ENCODE measurements at regions of chr1 and their contacts with region 1.

Region 1: GRCh38 chr1:9629445-9630201 is 21.9 kb upstream of the PIK3CD start:
- DNase-seq: peak; percentile 41 to 91 (median 76)
- ATAC-seq: peak; percentile 52
- H3K4me3 ChIP-seq: peak overlapping the region; percentile 97
- H3K4me3 Mint-ChIP-seq: peak overlapping the region; percentile 98
- H3K27ac ChIP-seq: peak overlapping the region; percentile 72 to 84
- H3K27ac Mint-ChIP-seq: peak overlapping the region; percentile 92
- H3K4me1 ChIP-seq: peaks cover 77% of the 10 kb centered on the region
- H3K4me1 Mint-ChIP-seq: peaks cover 70% of the 10 kb centered on the region
- H3K27me3 ChIP-seq: no peaks in the 10 kb centered on the region
- H3K27me3 Mint-ChIP-seq: no peaks in the 10 kb centered on the region
- CTCF ChIP-seq: no peak

Region 2: GRCh38 chr1:9609998-9610397 is 19.6 kb before region 1 on chr1:
- CTCF ChIA-PET with region 1: no interaction called
- POLR2A ChIA-PET with region 1: no interaction called
- intact Hi-C with region 1: no loop called
- DNase-seq: no peak
- ATAC-seq: no peak
- H3K4me3 ChIP-seq: no peak overlapping the region
- H3K4me3 Mint-ChIP-seq: no peak overlapping the region
- H3K27ac ChIP-seq: no peak overlapping the region
- H3K27ac Mint-ChIP-seq: no peak overlapping the region
- H3K4me1 ChIP-seq: no peaks in the 10 kb centered on the region
- H3K4me1 Mint-ChIP-seq: no peaks in the 10 kb centered on the region
- H3K27me3 ChIP-seq: no peaks in the 10 kb centered on the region
- H3K27me3 Mint-ChIP-seq: no peaks in the 10 kb centered on the region
- CTCF ChIP-seq: no peak

Region 3: DNA sequence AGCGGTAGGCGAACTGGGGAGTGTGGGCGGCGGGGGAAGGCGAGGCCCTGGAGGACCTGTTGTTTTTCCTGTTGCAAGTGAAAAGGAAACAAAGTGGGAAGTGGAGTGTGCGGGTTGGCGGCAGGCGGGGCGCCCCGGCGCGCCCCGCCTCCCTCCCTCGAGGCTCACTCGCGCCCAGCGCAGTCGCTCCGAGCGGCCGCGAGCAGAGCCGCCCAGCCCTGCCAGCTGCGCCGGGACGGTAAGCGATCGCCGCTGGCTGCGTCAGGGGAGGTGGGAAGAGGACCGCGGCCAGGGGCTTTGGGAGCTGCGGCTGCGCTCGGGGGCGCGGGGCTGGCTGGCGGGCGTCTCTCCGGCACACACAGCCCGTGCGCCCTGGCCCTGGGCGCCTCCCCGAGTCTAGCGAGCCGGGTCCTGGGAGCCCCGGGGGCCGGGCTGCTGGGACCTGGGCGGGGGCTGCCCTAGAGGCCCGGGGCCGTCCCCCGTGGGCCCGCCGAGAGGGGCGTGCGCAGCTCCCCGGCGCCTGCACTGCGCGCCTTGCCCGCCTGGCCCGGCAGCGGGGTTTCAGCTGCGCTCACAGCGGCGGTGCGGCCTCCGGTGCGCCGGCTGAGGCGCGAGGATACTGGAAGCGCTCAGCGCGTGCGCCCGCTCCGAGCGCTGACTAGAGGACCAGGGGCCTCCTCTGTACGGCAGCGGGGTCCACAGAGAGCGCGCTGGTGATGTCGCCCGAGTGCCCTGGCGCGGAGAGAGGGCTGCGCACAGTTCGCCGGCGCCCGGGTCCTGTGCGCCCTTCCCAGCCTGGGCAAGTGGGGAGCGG is 22.1 kb after region 1 on chr1 and contains the start of gene PIK3CD:
- CTCF ChIA-PET with region 1: interaction called, 117 read pairs
- POLR2A ChIA-PET with region 1: interaction called, 512 read pairs
- intact Hi-C with region 1: loop called (anchors 1 kb)
- DNase-seq: peak in 13 of 14 experiments; percentile 11 to 74 (median 46)
- ATAC-seq: peak; percentile 43
- H3K4me3 ChIP-seq: peak within 1 kb of the TSS; percentile 93
- H3K4me3 Mint-ChIP-seq: peak within 1 kb of the TSS; percentile 100
- H3K27ac ChIP-seq: peak within 1 kb of the TSS; percentile 61 to 88
- H3K27ac Mint-ChIP-seq: peak within 1 kb of the TSS; percentile 97
- H3K4me1 ChIP-seq: peaks cover 76% of the 10 kb centered on the region
- H3K4me1 Mint-ChIP-seq: peaks cover 73% of the 10 kb centered on the region
- H3K27me3 ChIP-seq: no peaks in the 10 kb centered on the region
- H3K27me3 Mint-ChIP-seq: no peaks in the 10 kb centered on the region
- CTCF ChIP-seq: no peak
- total RNA-seq, gene PIK3CD: 202 to 213 TPM

Region 4: GRCh38 chr1:9676815-9677393 is 47.3 kb after region 1 on chr1:
- CTCF ChIA-PET with region 1: interaction called, 14 read pairs
- POLR2A ChIA-PET with region 1: interaction called, 10 read pairs
- intact Hi-C with region 1: no loop called
- DNase-seq: no peak
- ATAC-seq: no peak
- H3K4me3 ChIP-seq: no peak overlapping the region
- H3K4me3 Mint-ChIP-seq: no peak overlapping the region
- H3K27ac ChIP-seq: peak overlapping the region; percentile 44 to 57
- H3K27ac Mint-ChIP-seq: peak overlapping the region; percentile 83
- H3K4me1 ChIP-seq: peaks cover 79% of the 10 kb centered on the region
- H3K4me1 Mint-ChIP-seq: peaks cover 69% of the 10 kb centered on the region
- H3K27me3 ChIP-seq: no peaks in the 10 kb centered on the region
- H3K27me3 Mint-ChIP-seq: no peaks in the 10 kb centered on the region
- CTCF ChIP-seq: no peak

Region 5: GRCh38 chr1:9717193-9718005 is 87.8 kb after region 1 on chr1:
- CTCF ChIA-PET with region 1: interaction called, 51 read pairs
- POLR2A ChIA-PET with region 1: interaction called, 157 read pairs
- intact Hi-C with region 1: loop called (anchors 1 to 2 kb)
- DNase-seq: peak; percentile 81 to 97 (median 90)
- ATAC-seq: peak; percentile 84
- H3K4me3 ChIP-seq: peak overlapping the region; percentile 91
- H3K4me3 Mint-ChIP-seq: peak overlapping the region; percentile 88
- H3K27ac ChIP-seq: peak overlapping the region; percentile 63 to 89
- H3K27ac Mint-ChIP-seq: peak overlapping the region; percentile 96
- H3K4me1 ChIP-seq: peaks cover 99% of the 10 kb centered on the region
- H3K4me1 Mint-ChIP-seq: peaks cover 52% of the 10 kb centered on the region
- H3K27me3 ChIP-seq: no peaks in the 10 kb centered on the region
- H3K27me3 Mint-ChIP-seq: no peaks in the 10 kb centered on the region
- CTCF ChIP-seq: no peak

Region 6: GRCh38 chr1:9784508-9785133 is 155.0 kb after region 1 on chr1:
- CTCF ChIA-PET with region 1: interaction called, 6 read pairs
- POLR2A ChIA-PET with region 1: interaction called, 3 read pairs
- intact Hi-C with region 1: loop called (anchors 2 kb)
- DNase-seq: peak; percentile 39 to 86 (median 58)
- ATAC-seq: peak; percentile 45
- H3K4me3 ChIP-seq: no peak overlapping the region
- H3K4me3 Mint-ChIP-seq: peak overlapping the region; percentile 62
- H3K27ac ChIP-seq: no peak overlapping the region
- H3K27ac Mint-ChIP-seq: peak overlapping the region; percentile 79
- H3K4me1 ChIP-seq: peaks cover 21% of the 10 kb centered on the region
- H3K4me1 Mint-ChIP-seq: peaks cover 36% of the 10 kb centered on the region
- H3K27me3 ChIP-seq: no peaks in the 10 kb centered on the region
- H3K27me3 Mint-ChIP-seq: no peaks in the 10 kb centered on the region
- CTCF ChIP-seq: peak; percentile 83

Measured in CD4-positive, alpha-beta T cell (primary cell).